ENCODE measurements at regions of chr6 and their contacts with region 1.

Region 1: GRCh38 chr6:151014404-151015100 is 149.1 kb downstream of the MTHFD1L start:
- DNase-seq: peak; percentile 73
- H3K4me3 ChIP-seq: no peak overlapping the region; a peak in 1 of 4 replicates
- H3K27ac ChIP-seq: peak overlapping the region in 1 of 2 experiments; percentile 24; a peak in 1 of 4 replicates
- H3K4me1 ChIP-seq: peaks cover 0 to 2% of the 10 kb centered on the region in 2 experiments; a peak in 1 of 4 replicates
- H3K27me3 ChIP-seq: no peaks in the 10 kb centered on the region
- CTCF ChIP-seq: peak; percentile 92
- EP300 ChIP-seq: no peak
- RAD21 ChIP-seq: peak; percentile 97

Region 2: DNA sequence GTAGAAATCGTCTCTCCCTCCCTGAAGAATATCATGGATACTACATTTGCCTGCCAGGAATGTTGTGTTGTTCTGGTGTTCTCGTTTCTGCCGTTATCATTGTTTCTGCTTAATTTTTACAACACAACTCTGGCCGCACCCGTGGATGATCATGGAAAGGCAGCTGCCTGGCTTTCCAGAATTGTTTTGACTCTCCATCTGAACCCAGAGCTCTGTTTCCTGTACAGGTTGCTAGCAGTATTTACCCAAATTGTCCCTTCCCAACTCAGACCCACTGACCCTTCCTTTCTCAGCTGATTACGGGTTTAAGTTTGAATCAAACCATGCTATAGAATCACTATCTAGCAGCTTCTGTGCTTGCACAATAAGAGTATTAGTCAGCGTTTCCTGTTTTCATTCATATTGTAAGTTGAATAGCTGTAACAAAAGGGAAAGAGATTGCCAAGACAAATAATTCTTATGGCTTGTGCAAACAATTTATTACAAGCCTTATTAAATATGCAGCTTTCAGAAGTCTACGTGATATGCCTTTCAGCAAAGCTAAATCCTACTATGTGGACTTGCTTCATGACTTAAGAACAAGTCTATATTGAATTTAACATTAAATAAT is 10.0 kb before region 1 on chr6:
- CTCF ChIA-PET with region 1: interaction called, 26 read pairs
- POLR2A ChIA-PET with region 1: no interaction called
- DNase-seq: no peak
- H3K4me3 ChIP-seq: no peak overlapping the region
- H3K27ac ChIP-seq: peak overlapping the region; percentile 47 to 74; a peak in 3 of 4 replicates
- H3K4me1 ChIP-seq: peaks cover 3 to 23% of the 10 kb centered on the region in 2 experiments; a peak in 2 of 4 replicates
- H3K27me3 ChIP-seq: no peaks in the 10 kb centered on the region
- CTCF ChIP-seq: no peak
- EP300 ChIP-seq: peak; percentile 18 to 66; a peak in 1 of 4 replicates
- RAD21 ChIP-seq: no peak

Region 3: GRCh38 chr6:151054311-151054710 is 39.8 kb after region 1 on chr6:
- CTCF ChIA-PET with region 1: interaction called, 12 read pairs
- POLR2A ChIA-PET with region 1: no interaction called
- DNase-seq: no peak
- H3K4me3 ChIP-seq: no peak overlapping the region
- H3K27ac ChIP-seq: no peak overlapping the region
- H3K4me1 ChIP-seq: peaks cover 13 to 39% of the 10 kb centered on the region in 2 experiments; a peak in 3 of 4 replicates
- H3K27me3 ChIP-seq: no peaks in the 10 kb centered on the region
- CTCF ChIP-seq: no peak
- EP300 ChIP-seq: no peak
- RAD21 ChIP-seq: no peak

Region 4: DNA sequence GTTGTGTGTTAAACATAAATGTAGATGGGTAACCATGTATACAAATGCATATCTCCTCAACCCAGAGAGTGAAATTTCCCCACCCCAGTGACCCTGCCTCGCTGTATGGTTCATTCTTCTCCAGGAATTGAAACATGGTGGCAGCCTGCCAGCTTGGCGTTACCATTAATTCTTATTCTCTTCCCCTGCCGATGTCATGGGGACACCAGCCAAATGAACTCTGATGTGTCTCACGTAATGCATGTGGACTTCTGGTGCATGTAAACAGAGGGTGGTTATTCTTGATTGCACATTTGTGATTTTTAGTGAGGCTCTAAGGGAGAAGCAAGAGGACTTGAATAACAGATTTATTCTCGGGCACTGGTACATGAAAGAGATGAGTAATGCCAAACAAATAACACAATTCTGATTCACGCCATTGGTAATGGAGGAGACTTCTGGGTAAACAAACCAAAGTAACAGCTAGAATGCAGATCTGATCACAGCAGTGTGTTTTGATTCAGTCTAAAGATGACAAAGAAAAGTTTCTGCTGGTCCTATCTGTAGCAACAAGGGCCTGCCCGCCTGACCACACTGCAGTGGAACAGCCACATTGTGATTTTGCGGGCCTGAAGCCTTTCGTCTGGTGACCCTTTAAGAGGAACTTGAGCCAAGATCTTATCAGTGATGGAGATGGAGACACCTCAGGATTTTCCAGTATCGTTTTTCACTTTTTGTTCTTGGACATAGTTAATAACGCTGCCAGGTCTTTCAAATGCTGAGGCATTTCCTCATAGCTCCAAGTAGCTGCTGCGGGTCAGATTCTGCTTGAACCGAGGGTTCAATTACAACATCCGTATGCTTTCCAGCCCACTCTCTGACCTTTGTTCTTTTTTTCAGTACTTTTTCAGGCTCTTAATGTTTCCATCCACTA is 53.4 kb after region 1 on chr6:
- CTCF ChIA-PET with region 1: interaction called, 12 read pairs
- POLR2A ChIA-PET with region 1: no interaction called
- DNase-seq: no peak
- H3K4me3 ChIP-seq: no peak overlapping the region
- H3K27ac ChIP-seq: peak overlapping the region; percentile 81 to 98
- H3K4me1 ChIP-seq: peaks cover 15 to 21% of the 10 kb centered on the region in 2 experiments
- H3K27me3 ChIP-seq: no peaks in the 10 kb centered on the region
- CTCF ChIP-seq: no peak
- EP300 ChIP-seq: 0 out of 4 replicates have a peak, but pooled peaks of 1 of the 2 experiments have one; percentile 13
- RAD21 ChIP-seq: no peak

Region 5: DNA sequence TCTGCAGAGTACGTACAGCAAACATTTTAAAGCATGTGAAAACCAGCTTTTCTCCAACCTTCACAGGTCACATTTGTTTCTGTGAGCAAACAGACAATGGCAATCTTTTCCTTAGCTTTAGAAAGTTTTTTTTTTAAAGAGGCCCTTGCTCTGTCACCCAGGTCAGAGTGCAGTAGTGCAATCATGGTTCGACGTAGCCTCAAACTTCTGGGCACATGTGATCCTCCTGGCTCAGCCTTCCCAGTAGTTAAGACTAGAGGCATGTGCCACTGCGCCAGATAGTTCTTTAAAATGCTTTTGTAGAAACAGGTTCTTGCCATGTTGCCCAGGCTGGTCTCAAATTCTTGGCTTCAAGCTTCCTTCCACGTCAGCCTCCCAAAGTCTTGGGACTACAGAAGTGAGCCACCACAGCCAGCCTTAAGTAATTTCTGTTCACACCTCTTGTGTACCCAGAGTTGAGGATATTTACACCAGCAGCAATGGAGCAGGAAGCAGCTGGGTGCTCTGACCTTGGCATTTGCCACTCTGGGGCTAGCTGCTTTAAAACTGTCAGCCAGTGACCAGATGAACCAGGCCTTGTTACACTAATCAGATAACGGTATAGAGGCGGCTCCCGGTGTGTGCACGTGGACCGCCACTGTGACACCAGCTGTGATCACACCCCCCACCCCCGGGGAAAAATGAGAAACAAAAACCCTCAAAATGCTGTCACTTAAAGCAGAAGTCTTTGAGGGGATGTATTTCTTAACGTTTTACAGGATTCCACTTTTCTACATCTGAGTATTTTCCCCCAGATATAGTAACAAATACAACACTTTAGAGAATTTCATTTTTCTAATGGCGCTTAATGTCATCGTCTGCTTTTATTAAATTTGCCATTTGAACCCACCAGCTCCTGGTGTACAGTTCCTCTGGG is 296.6 kb after region 1 on chr6:
- CTCF ChIA-PET with region 1: interaction called, 10 read pairs
- POLR2A ChIA-PET with region 1: no interaction called
- DNase-seq: peak; percentile 74
- H3K4me3 ChIP-seq: no peak overlapping the region
- H3K27ac ChIP-seq: peak overlapping the region in 1 of 2 experiments; percentile 40; a peak in 1 of 4 replicates
- H3K4me1 ChIP-seq: peaks cover 0 to 4% of the 10 kb centered on the region in 2 experiments; a peak in 1 of 4 replicates
- H3K27me3 ChIP-seq: no peaks in the 10 kb centered on the region
- CTCF ChIP-seq: no peak
- EP300 ChIP-seq: no peak
- RAD21 ChIP-seq: no peak

Region 6: GRCh38 chr6:151323791-151324487 is 309.4 kb after region 1 on chr6:
- CTCF ChIA-PET with region 1: interaction called, 371 read pairs
- POLR2A ChIA-PET with region 1: no interaction called
- DNase-seq: peak; percentile 81
- H3K4me3 ChIP-seq: peak overlapping the region in 1 of 2 experiments; percentile 22; a peak in 1 of 4 replicates
- H3K27ac ChIP-seq: peak overlapping the region; percentile 35 to 76
- H3K4me1 ChIP-seq: peaks cover 7 to 14% of the 10 kb centered on the region in 2 experiments; a peak in 3 of 4 replicates
- H3K27me3 ChIP-seq: no peaks in the 10 kb centered on the region
- CTCF ChIP-seq: peak; percentile 90
- EP300 ChIP-seq: no peak
- RAD21 ChIP-seq: peak; percentile 97

Region 7: GRCh38 chr6:151335930-151336329 is 321.4 kb after region 1 on chr6:
- CTCF ChIA-PET with region 1: interaction called, 55 read pairs
- POLR2A ChIA-PET with region 1: no interaction called
- DNase-seq: no peak
- H3K4me3 ChIP-seq: no peak overlapping the region
- H3K27ac ChIP-seq: no peak overlapping the region
- H3K4me1 ChIP-seq: no peaks in the 10 kb centered on the region; a peak in 1 of 4 replicates
- H3K27me3 ChIP-seq: no peaks in the 10 kb centered on the region
- CTCF ChIP-seq: no peak
- EP300 ChIP-seq: no peak
- RAD21 ChIP-seq: no peak